ENCODE measurements at regions of chr5 and their contacts with region 1.

Region 1: GRCh38 chr5:163459922-163460766 is at the starts of genes HMMR and NUDCD2:
- DNase-seq: peak; percentile 98
- ATAC-seq: peak; percentile 85
- H3K4me3 Mint-ChIP-seq: peak within 1 kb of the TSS; percentile 99
- H3K27ac Mint-ChIP-seq: peak within 1 kb of the TSS; percentile 99
- H3K4me1 Mint-ChIP-seq: peaks cover 33% of the 10 kb centered on the region
- H3K27me3 Mint-ChIP-seq: no peaks in the 10 kb centered on the region
- total RNA-seq, gene HMMR: 50.5 to 54.5 TPM
- total RNA-seq, gene NUDCD2: 36.2 to 37.1 TPM

Region 2: DNA sequence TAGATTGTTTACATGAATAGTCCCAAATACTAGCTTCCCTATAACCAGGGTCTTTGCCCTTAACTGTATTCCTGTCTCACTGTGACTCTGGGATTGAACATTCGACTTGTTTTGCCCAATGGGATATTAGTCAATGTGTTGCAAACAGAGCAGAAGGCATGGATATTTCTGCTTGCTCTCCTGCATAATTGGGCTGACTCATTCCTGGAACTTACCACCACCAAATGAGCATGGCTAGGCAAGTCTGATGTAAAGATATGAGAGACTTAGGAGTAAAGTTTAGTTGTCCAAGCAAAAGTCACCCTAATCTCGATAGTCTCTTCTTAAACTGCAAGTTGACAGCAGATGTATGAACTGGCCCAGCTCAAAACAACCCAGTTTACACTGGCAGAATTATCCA is 296.3 kb before region 1 on chr5:
- POLR2A ChIA-PET with region 1: no interaction called
- DNase-seq: no peak
- ATAC-seq: no peak
- H3K4me3 Mint-ChIP-seq: no peak overlapping the region
- H3K27ac Mint-ChIP-seq: no peak overlapping the region
- H3K4me1 Mint-ChIP-seq: no peaks in the 10 kb centered on the region
- H3K27me3 Mint-ChIP-seq: no peaks in the 10 kb centered on the region

Region 3: GRCh38 chr5:163437309-163438182 is 22.6 kb before region 1 on chr5 and contains the start of gene CCNG1:
- POLR2A ChIA-PET with region 1: interaction called, 161 read pairs
- DNase-seq: peak; percentile 83
- ATAC-seq: peak; percentile 98
- H3K4me3 Mint-ChIP-seq: peak within 1 kb of the TSS; percentile 94
- H3K27ac Mint-ChIP-seq: peak within 1 kb of the TSS; percentile 85
- H3K4me1 Mint-ChIP-seq: peaks cover 36% of the 10 kb centered on the region
- H3K27me3 Mint-ChIP-seq: peaks cover 9% of the 10 kb centered on the region
- total RNA-seq, gene CCNG1: 138 to 144 TPM

Region 4: GRCh38 chr5:163473635-163474243 is 13.6 kb after region 1 on chr5:
- POLR2A ChIA-PET with region 1: interaction called, 32 read pairs
- DNase-seq: no peak
- ATAC-seq: no peak
- H3K4me3 Mint-ChIP-seq: no peak overlapping the region
- H3K27ac Mint-ChIP-seq: no peak overlapping the region
- H3K4me1 Mint-ChIP-seq: no peaks in the 10 kb centered on the region
- H3K27me3 Mint-ChIP-seq: no peaks in the 10 kb centered on the region

Region 5: DNA sequence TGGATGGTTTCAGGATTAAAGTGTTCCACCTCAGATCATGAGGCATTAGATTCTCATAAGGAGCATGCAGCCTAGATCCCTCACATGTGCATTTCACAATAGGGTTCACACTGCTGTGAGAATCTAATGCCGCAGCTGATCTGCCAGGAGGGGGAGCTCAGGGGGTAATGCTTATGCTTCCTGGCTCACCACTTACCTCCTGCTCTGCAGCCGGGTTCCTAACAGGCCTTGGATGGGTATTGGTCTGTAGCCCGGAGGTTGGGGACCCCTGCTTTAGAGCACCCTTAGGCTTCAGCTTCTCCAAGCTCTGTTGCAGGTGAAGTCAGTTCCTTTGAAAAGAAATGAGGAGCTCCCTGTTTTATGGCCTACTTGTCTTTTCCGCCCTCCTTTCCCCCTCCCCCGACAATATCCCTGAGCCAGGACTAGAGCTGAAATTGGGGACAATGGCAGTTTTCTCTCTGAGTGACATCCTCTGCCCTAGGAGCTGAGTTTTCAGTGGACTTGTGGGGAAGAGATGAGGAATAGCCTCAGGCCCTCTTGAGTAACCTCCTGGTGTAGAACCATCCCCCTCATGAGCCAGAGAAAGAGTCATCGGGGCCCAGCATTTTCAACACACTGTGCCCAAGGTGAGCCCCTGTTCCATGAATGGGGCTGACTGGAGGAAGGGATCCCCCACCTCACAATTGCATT is 29.1 kb after region 1 on chr5:
- POLR2A ChIA-PET with region 1: interaction called, 18 read pairs
- DNase-seq: no peak
- ATAC-seq: no peak
- H3K4me3 Mint-ChIP-seq: no peak overlapping the region
- H3K27ac Mint-ChIP-seq: no peak overlapping the region
- H3K4me1 Mint-ChIP-seq: no peaks in the 10 kb centered on the region
- H3K27me3 Mint-ChIP-seq: no peaks in the 10 kb centered on the region

Region 6: DNA sequence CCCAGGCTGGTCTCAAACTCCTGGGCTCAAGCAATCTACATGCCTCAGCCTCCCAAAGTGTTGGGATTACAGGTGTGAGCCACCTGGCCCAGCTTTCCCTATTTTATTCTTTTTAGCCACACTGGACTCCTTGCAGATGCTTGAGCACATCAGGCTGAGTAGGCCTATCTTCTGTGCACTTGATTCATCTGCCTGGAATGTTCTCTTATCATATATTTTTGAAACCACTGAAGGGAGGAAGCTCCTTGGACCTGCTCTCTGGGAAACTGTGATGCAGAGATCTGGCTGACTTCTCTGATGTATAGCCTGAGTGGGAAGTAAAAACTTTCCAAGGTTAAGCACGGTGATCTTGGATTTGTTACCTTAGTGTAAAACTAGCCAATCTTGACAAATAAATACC is 38.7 kb after region 1 on chr5:
- POLR2A ChIA-PET with region 1: interaction called, 177 read pairs
- DNase-seq: no peak
- ATAC-seq: no peak
- H3K4me3 Mint-ChIP-seq: no peak overlapping the region
- H3K27ac Mint-ChIP-seq: no peak overlapping the region
- H3K4me1 Mint-ChIP-seq: peaks cover 6% of the 10 kb centered on the region
- H3K27me3 Mint-ChIP-seq: no peaks in the 10 kb centered on the region

Region 7: DNA sequence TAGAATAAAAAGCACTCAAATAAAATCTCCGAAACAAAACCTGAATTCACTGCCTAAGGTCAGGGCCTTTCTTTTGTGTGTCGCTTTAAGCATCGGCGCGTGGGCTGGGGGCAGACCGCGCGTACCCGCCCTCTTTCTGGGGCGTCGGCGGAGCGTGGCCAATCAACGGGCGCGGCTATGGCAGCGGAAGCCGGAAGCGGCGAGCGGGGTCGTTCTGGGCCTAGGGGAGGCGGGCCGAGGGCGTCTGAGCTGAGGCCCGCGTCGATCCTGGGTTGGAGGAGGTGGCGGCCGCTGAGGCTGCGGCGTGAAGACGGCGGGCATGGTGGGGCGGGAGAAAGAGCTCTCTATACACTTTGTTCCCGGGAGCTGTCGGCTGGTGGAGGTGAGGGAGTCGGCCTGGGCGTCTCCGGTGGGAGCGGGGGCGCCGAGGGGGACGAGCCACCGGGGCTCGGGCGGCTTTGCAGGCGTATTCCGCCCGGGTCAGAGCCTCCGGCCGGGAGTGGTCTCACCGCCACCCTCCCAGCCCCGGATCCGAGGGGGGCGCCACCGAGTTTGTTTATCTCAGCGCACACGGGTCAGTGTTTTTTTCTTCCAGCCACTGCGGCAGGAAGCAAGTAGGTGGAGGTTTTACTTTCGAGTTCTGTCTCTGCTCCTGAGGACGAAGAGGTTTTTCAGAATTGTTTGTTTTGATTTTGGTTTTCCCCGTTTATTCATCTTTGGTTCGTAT is 45.4 kb after region 1 on chr5 and contains the start of gene MAT2B:
- POLR2A ChIA-PET with region 1: interaction called, 177 read pairs
- DNase-seq: peak; percentile 95
- ATAC-seq: peak; percentile 93
- H3K4me3 Mint-ChIP-seq: peak within 1 kb of the TSS; percentile 95
- H3K27ac Mint-ChIP-seq: peak within 1 kb of the TSS; percentile 97
- H3K4me1 Mint-ChIP-seq: peaks cover 29% of the 10 kb centered on the region
- H3K27me3 Mint-ChIP-seq: no peaks in the 10 kb centered on the region
- total RNA-seq, gene MAT2B: 98.7 to 101 TPM

Region 8: GRCh38 chr5:163595932-163596607 is 135.9 kb after region 1 on chr5:
- POLR2A ChIA-PET with region 1: no interaction called
- DNase-seq: no peak
- ATAC-seq: no peak
- H3K4me3 Mint-ChIP-seq: no peak overlapping the region
- H3K27ac Mint-ChIP-seq: no peak overlapping the region
- H3K4me1 Mint-ChIP-seq: no peaks in the 10 kb centered on the region
- H3K27me3 Mint-ChIP-seq: peaks cover 2% of the 10 kb centered on the region